Sciatic nerve (tissue), 2 donors: ENCODE measurements at regions of chr2 and their contacts with region 1.

Region 1: DNA sequence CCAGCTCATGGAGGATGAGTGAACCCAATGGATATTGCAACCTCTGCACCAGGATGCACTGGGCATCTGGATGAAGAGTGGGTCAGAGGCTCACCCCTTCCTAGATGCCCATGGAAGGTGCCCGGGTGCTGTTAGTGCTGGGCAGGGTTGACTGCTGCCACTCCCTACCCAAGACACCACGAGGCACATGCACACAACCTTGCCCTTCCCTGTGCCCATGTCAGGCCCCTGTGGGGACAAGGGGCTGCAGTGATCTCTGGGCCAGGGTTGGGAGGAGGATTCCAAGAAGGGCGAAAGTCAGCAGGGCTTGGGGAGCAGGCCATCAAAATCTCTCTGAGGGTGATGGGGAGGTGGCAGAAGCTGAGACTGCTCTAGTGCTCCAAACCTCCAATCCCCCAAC is 309.7 kb upstream of the ST6GAL2 start:
- DNase-seq: no peak
- ATAC-seq: no peak

Region 2: DNA sequence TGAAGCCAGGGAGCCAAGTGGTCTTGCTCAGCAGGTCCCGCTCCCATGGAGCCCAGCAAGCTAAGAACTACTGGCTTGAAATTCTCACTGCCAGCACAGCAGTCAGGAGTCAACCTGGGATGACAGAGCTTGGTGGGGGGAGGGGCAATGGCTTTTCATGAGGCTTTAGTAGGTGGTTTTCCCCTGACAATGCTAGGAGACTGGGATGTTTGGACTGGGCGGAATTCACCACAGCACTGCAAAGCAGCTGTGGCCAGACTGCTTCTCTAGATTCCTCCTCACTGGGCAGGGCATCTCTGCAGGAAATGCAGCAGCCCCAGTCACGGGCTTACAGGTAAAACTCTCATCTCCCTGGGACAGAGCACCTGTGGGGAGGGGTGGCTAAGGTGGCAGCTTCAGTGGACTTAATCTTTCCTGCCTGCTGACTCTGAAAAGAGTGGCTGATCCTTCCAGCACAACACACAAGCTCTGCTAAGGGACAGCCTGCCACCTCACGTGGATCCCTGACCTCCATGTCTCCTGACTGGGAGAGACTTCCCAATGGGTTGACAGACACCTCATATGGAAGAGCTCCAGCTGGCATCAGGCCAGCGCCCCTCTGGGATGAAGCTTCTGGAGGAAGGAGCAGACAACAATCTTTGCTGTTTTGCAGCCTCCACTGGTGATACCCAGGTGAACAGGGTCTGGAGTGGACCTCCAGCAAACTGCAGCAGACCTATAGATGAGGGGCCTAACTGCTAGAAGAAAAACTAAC is 40.0 kb after region 1 on chr2:
- intact Hi-C with region 1: loop called (anchors 1 kb)
- DNase-seq: no peak
- ATAC-seq: no peak